ENCODE measurements at regions of chr10 and their contacts with region 1.

Region 1: DNA sequence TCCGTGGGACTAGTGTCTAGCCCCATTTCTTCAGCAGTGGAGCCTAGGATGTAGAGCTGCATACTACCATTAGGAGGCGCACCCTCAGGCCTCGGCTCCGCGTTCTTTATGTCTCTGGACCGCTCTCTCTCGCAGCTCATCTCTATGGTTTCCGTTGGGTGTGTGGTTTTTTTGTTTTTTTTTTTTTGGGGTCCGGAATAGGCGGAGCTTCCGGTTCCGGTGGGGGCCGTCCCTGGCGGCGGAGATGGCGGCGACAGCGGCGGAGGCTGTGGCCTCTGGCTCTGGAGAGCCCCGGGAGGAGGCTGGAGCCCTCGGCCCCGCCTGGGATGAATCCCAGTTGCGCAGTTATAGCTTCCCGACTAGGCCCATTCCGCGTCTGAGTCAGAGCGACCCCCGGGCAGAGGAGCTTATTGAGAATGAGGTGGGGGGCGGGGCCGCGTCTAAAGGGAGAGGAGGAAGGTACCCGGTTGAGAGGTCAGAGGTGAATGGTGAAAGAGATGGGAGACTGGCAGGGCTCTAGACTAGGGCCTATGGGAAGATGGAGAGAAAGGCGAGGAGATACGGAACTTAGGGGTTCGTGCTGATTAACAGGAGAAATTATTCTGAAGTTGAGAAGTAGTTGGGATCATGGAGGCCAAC is at the start of gene HIF1AN:
- DNase-seq: peak; percentile 79
- ATAC-seq: peak; percentile 100
- H3K4me3 Mint-ChIP-seq: no peak within 1 kb of the TSS
- H3K27ac Mint-ChIP-seq: no peak within 1 kb of the TSS
- H3K4me1 Mint-ChIP-seq: peaks cover 14% of the 10 kb centered on the region
- H3K27me3 Mint-ChIP-seq: no peaks in the 10 kb centered on the region
- CTCF ChIP-seq: peak; percentile 3
- total RNA-seq, gene HIF1AN: 55.8 and 59.9 TPM in 2 replicates

Region 2: GRCh38 chr10:100216006-100216405 is 319.8 kb before region 1 on chr10:
- CTCF ChIA-PET with region 1: no interaction called
- POLR2A ChIA-PET with region 1: no interaction called
- intact Hi-C with region 1: no loop called
- DNase-seq: no peak
- ATAC-seq: no peak
- H3K4me3 Mint-ChIP-seq: no peak overlapping the region
- H3K27ac Mint-ChIP-seq: no peak overlapping the region
- H3K4me1 Mint-ChIP-seq: no peaks in the 10 kb centered on the region
- H3K27me3 Mint-ChIP-seq: no peaks in the 10 kb centered on the region
- CTCF ChIP-seq: no peak

Region 3: GRCh38 chr10:100481462-100482081 is 54.3 kb before region 1 on chr10:
- CTCF ChIA-PET with region 1: no interaction called
- POLR2A ChIA-PET with region 1: interaction called, 5 read pairs
- intact Hi-C with region 1: loop called (anchors 1 kb)
- DNase-seq: peak; percentile 89
- ATAC-seq: peak; percentile 99
- H3K4me3 Mint-ChIP-seq: peak overlapping the region; percentile 87
- H3K27ac Mint-ChIP-seq: no peak overlapping the region
- H3K4me1 Mint-ChIP-seq: peaks cover 9% of the 10 kb centered on the region
- H3K27me3 Mint-ChIP-seq: peaks cover 30% of the 10 kb centered on the region
- CTCF ChIP-seq: no peak

Region 4: GRCh38 chr10:100728928-100729861 is 193.4 kb after region 1 on chr10:
- CTCF ChIA-PET with region 1: no interaction called
- POLR2A ChIA-PET with region 1: no interaction called
- intact Hi-C with region 1: no loop called
- DNase-seq: no peak
- ATAC-seq: peak; percentile 48
- H3K4me3 Mint-ChIP-seq: peak overlapping the region; percentile 40
- H3K27ac Mint-ChIP-seq: no peak overlapping the region
- H3K4me1 Mint-ChIP-seq: peaks cover 26% of the 10 kb centered on the region
- H3K27me3 Mint-ChIP-seq: peaks cover 72% of the 10 kb centered on the region
- CTCF ChIP-seq: no peak

Region 5: DNA sequence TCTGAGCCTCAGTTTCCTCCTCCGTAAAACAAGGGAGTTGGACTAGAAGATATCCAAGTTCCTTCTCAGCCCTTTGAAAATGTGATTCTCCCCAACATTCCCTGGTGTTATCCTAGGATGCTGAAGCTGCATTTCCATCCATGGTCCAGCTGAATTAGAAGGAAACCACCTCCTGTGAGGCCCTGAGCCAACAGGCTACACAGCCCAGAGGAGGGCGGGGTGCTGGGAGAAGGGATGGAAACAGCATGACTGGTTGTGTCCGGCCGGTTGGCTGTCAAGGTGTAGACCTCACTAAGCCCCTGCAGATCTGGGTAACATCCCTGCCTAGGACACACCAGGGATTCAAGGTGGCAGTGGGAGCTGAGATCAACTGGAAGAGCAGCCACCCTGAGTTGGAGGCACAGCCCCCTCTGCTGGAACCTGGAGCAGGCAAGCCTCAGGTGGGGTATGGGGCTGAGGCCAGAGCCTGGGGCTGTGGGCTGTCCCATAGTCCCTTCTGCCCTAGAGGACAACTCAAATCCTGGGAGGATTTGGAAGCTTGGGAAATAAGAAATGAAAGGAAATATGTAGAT is 281.5 kb after region 1 on chr10:
- CTCF ChIA-PET with region 1: no interaction called
- POLR2A ChIA-PET with region 1: no interaction called
- intact Hi-C with region 1: no loop called
- DNase-seq: no peak
- ATAC-seq: no peak
- H3K4me3 Mint-ChIP-seq: no peak overlapping the region
- H3K27ac Mint-ChIP-seq: no peak overlapping the region
- H3K4me1 Mint-ChIP-seq: no peaks in the 10 kb centered on the region
- H3K27me3 Mint-ChIP-seq: peaks cover 45% of the 10 kb centered on the region
- CTCF ChIP-seq: no peak

Region 6: GRCh38 chr10:100912605-100913469 is 377.0 kb after region 1 on chr10 and contains the start of gene SLF2:
- CTCF ChIA-PET with region 1: no interaction called
- POLR2A ChIA-PET with region 1: interaction called, 6 read pairs
- intact Hi-C with region 1: loop called (anchors 1 kb)
- DNase-seq: peak; percentile 82
- ATAC-seq: peak; percentile 97
- H3K4me3 Mint-ChIP-seq: peak within 1 kb of the TSS; percentile 99
- H3K27ac Mint-ChIP-seq: peak within 1 kb of the TSS; percentile 96
- H3K4me1 Mint-ChIP-seq: peaks cover 33% of the 10 kb centered on the region
- H3K27me3 Mint-ChIP-seq: no peaks in the 10 kb centered on the region
- CTCF ChIP-seq: no peak
- total RNA-seq, gene SLF2: 29.9 and 35.5 TPM in 2 replicates

Measured in activated B cell treated with CpG ODN at 0.5 μM for 24 hours (primary cell).